PC-9 (cell line): ENCODE measurements at regions of chr20 and their contacts with region 1.

Region 1: GRCh38 chr20:56629670-56630478 is 768 bp downstream of the TFAP2C start:
- DNase-seq: peak; percentile 92 to 94
- H3K4me3 ChIP-seq: peak overlapping the region; percentile 100
- H3K27ac ChIP-seq: peak overlapping the region; percentile 70
- H3K4me1 ChIP-seq: peaks cover 54% of the 10 kb centered on the region
- H3K27me3 ChIP-seq: no peaks in the 10 kb centered on the region
- CTCF ChIP-seq: peak; percentile 94

Region 2: DNA sequence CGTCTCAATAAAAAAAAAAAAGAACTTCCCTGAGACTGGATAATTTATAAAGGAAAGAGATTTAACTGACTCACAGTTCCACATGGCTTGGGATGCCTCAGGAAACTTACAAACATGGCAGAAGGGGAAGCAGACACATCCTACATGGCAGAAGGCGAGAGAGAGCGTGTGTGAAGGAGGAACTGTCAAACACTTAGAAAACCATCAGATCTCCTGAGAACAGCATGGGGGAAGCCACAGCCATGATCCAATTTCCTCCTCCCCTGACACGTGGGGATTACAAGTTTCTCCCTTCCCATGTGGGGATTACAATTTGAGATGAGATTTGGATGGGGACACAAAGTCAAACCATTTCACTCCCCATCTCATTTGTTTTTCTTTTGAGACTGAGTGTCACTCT is 47.3 kb before region 1 on chr20:
- CTCF ChIA-PET with region 1: no interaction called
- POLR2A ChIA-PET with region 1: no interaction called
- intact Hi-C with region 1: loop called (anchors 1 kb)
- DNase-seq: no peak
- H3K4me3 ChIP-seq: no peak overlapping the region
- H3K27ac ChIP-seq: no peak overlapping the region
- H3K4me1 ChIP-seq: peaks cover 25% of the 10 kb centered on the region
- H3K27me3 ChIP-seq: no peaks in the 10 kb centered on the region
- CTCF ChIP-seq: no peak

Region 3: DNA sequence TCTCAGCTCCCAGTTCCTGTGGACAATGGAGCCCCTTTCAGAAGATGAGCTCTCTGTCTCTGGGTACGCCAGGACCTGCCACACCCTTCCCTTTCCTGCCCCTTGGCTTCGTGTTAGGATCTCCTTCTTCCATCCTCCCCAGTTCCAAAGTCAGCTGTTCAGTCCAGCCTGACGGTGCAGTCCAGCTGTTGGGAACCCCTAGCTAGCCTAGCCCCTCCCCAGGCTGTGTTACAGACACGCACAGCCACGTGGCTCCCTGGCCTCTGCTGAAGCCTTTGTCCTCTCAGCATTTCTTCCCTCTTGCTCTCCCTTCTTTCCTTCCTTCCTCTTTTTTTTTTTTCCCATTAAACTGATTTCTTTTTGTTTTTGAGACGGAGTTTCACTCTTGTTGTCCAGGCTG is 13.2 kb before region 1 on chr20:
- CTCF ChIA-PET with region 1: no interaction called
- POLR2A ChIA-PET with region 1: no interaction called
- intact Hi-C with region 1: no loop called
- DNase-seq: no peak
- H3K4me3 ChIP-seq: no peak overlapping the region
- H3K27ac ChIP-seq: no peak overlapping the region
- H3K4me1 ChIP-seq: peaks cover 7% of the 10 kb centered on the region
- H3K27me3 ChIP-seq: no peaks in the 10 kb centered on the region
- CTCF ChIP-seq: no peak

Region 4: GRCh38 chr20:56689288-56689687 is 59.4 kb after region 1 on chr20:
- CTCF ChIA-PET with region 1: interaction called, 3 read pairs
- POLR2A ChIA-PET with region 1: no interaction called
- intact Hi-C with region 1: loop called (anchors 2 kb)
- DNase-seq: peak; percentile 84 to 98
- H3K4me3 ChIP-seq: peak overlapping the region; percentile 50
- H3K27ac ChIP-seq: peak overlapping the region; percentile 99
- H3K4me1 ChIP-seq: peaks cover 55% of the 10 kb centered on the region
- H3K27me3 ChIP-seq: no peaks in the 10 kb centered on the region
- CTCF ChIP-seq: no peak

Region 5: GRCh38 chr20:56801744-56802670 is 172.1 kb after region 1 on chr20:
- CTCF ChIA-PET with region 1: interaction called, 6 read pairs
- POLR2A ChIA-PET with region 1: no interaction called
- intact Hi-C with region 1: loop called (anchors 5 kb)
- DNase-seq: no peak
- H3K4me3 ChIP-seq: no peak overlapping the region
- H3K27ac ChIP-seq: no peak overlapping the region
- H3K4me1 ChIP-seq: peaks cover 27% of the 10 kb centered on the region
- H3K27me3 ChIP-seq: no peaks in the 10 kb centered on the region
- CTCF ChIP-seq: no peak

Region 6: GRCh38 chr20:56995576-56996075 is 365.8 kb after region 1 on chr20:
- CTCF ChIA-PET with region 1: no interaction called
- POLR2A ChIA-PET with region 1: no interaction called
- intact Hi-C with region 1: loop called (anchors 1 kb)
- DNase-seq: peak; percentile 47 to 55
- H3K4me3 ChIP-seq: no peak overlapping the region
- H3K27ac ChIP-seq: no peak overlapping the region
- H3K4me1 ChIP-seq: peaks cover 11% of the 10 kb centered on the region
- H3K27me3 ChIP-seq: no peaks in the 10 kb centered on the region
- CTCF ChIP-seq: peak; percentile 77